Common myeloid progenitor, CD34-positive (primary cell): ENCODE measurements at regions of chr10 and their contacts with region 1.

Region 1: DNA sequence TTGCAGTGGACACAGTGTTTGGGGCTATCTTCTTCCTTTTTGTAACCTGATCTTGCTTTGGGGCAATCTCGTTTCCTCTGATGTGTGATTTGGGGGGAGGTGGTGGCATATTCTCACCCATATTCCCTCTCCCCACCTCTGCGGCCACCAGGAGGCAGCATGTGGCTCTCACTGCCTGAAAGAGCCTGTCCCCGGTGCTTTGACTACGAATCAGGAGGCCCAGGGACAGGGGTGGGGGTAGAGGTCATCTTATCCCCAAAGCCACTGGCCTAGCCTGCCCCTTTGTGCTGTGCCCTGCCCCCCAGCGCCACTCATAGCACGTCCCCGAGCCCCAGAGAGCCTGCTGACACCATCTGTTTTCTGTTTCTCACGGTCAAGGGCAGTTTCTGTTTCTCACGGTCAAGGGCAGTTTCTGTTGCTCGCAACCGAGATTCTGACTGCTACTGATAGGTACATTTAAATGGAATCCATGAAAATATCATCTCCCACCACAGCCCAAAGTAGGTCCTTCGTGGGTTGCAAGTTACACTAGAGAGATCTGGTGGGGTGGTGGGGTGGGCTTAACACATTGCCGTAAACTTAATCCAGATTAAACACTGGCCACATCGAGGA is 28.2 kb downstream of the PHYH start:
- DNase-seq: peak; percentile 16 to 34 (median 30)
- H3K4me3 ChIP-seq: no peak overlapping the region
- H3K27ac ChIP-seq: no peak overlapping the region
- H3K4me1 ChIP-seq: no peaks in the 10 kb centered on the region
- H3K27me3 ChIP-seq: no peaks in the 10 kb centered on the region

Region 2: DNA sequence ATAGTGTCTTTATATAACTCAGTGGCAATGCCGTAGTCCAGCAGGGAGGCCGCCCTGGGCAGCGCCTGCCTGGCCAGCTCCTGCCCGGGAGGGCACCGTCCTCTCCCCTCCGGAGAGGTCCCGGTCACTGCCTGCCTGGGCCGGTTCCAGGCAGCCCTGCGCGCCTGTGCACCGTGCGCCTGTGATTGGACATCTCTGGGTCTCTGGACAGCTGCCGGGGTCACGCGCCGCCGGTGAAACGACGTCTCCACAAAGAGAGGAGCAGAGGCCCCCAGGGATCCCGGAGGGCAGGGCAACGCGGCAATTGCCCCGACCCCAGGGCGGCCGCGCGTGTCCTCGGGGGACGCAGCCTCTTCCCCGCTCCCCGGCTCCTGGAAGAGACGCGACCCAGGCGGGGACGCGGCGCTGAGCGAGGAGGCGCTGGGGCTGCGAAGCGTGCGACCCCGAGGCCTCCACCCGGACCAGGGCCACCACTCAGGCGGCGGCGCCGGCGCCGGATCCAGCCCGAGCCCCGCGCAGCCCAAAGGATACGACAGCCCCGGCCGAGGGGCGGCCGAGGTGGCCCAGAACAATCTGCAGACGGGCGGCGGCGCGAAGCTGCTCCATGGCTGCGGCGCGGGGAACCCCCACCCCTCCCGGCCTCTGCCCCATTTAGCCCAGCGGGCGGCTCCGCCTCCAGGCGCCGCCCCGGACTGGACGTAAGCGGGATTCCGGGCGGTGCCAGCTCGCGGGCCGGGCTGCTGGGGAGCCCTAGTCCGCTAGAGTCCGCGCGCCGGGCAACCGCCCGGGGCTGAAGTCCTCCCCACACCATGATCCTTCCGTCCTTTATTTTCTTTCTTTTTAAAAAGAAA is 28.0 kb after region 1 on chr10 and contains the start of gene PHYH:
- CTCF ChIA-PET with region 1: interaction called, 12 read pairs
- POLR2A ChIA-PET with region 1: interaction called, 4 read pairs
- DNase-seq: peak; percentile 79 to 89 (median 87)
- H3K4me3 ChIP-seq: peak within 1 kb of the TSS; percentile 57 to 84 (median 73)
- H3K27ac ChIP-seq: peak within 1 kb of the TSS; percentile 7 to 77
- H3K4me1 ChIP-seq: peaks cover 3 to 31% (median 20%) of the 10 kb centered on the region in 4 experiments
- H3K27me3 ChIP-seq: no peaks in the 10 kb centered on the region